ENCODE measurements at regions of chr10 and their contacts with region 1.

Region 1: DNA sequence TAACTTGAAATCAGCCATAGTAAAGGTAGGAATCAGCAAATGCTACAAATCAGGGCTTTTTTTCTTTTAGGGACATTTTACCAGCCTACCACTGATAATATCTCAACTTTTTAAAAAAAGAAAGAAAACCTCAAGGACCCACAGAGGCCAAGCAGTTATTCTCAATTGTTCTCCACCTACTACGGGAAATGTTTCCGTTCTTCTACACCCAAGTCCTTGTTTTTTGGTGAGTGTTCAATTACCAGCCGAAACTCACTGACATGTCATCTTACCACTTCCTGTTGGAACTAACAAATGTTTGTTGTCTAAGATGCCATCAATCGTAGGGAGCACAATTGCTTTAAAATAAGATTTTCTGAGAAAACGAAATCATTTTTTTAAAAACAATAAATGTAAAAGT is 50.2 kb upstream of the CDK1 start:
- DNase-seq: peak; percentile 87
- H3K4me3 Mint-ChIP-seq: peak overlapping the region; percentile 84
- H3K27ac Mint-ChIP-seq: peak overlapping the region; percentile 88
- H3K4me1 Mint-ChIP-seq: peaks cover 71% of the 10 kb centered on the region
- H3K27me3 Mint-ChIP-seq: no peaks in the 10 kb centered on the region

Region 2: GRCh38 chr10:60566096-60566495 is 162.0 kb before region 1 on chr10:
- intact Hi-C with region 1: loop called (anchors 2 kb)
- DNase-seq: no peak
- H3K4me3 Mint-ChIP-seq: peak overlapping the region; percentile 47
- H3K27ac Mint-ChIP-seq: peak overlapping the region; percentile 62
- H3K4me1 Mint-ChIP-seq: peaks cover 26% of the 10 kb centered on the region
- H3K27me3 Mint-ChIP-seq: no peaks in the 10 kb centered on the region

Region 3: DNA sequence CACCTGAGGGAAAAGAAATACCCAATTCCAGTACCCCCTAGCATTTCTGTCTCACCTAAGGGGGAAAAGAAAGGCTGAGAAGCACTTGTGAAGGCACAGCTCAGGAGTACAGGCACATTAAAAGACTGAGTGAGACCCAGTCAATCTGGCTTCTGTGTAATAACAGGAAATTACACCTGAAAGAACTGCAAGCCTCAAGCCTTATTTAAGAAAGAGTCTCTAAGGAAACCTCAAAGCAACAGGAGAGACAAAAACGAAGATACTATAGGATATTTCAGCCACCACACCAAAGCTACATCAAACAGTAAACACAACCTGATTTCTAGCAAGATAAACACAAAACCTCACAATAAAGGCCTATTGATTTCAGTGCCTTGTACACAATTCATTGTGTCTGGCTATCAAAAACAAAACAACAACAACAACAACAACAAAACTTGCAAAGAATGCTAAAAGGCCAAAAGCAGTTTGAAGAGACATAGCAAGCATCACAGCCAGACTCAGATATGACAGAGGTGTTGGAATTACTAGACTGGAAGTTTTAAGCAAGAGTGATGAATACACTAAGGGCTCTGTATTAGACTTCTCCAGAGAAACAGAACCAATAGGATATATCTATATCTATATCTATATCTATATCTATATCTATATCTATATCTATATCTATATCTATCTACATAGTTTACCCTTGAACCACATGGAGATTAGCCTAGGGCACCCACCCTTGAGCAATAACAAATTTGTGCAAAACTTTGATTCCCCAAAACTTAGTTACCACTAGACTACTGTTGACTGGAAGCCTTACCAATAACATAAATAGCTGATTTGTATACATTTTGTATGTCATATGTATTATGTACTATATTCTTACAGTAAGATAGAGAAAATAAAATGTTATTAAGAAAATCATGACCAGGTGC is 19.1 kb before region 1 on chr10:
- intact Hi-C with region 1: loop called (anchors 2 kb)
- DNase-seq: peak; percentile 77
- H3K4me3 Mint-ChIP-seq: peak overlapping the region; percentile 65
- H3K27ac Mint-ChIP-seq: peak overlapping the region; percentile 85
- H3K4me1 Mint-ChIP-seq: peaks cover 42% of the 10 kb centered on the region
- H3K27me3 Mint-ChIP-seq: no peaks in the 10 kb centered on the region

Region 4: GRCh38 chr10:60714233-60714632 is 13.8 kb before region 1 on chr10:
- intact Hi-C with region 1: loop called (anchors 2 kb)
- DNase-seq: no peak
- H3K4me3 Mint-ChIP-seq: peak overlapping the region; percentile 16
- H3K27ac Mint-ChIP-seq: peak overlapping the region; percentile 43
- H3K4me1 Mint-ChIP-seq: peaks cover 32% of the 10 kb centered on the region
- H3K27me3 Mint-ChIP-seq: no peaks in the 10 kb centered on the region